ENCODE measurements at regions of chr12 and their contacts with region 1.

Region 1: GRCh38 chr12:38138225-38139221 is 178.1 kb upstream of the ALG10B start:
- DNase-seq: peak; percentile 70
- ATAC-seq: peak; percentile 71
- H3K4me3 Mint-ChIP-seq: peak overlapping the region; percentile 67
- H3K27ac Mint-ChIP-seq: no peak overlapping the region
- H3K4me1 Mint-ChIP-seq: peaks cover 9% of the 10 kb centered on the region
- H3K27me3 Mint-ChIP-seq: peaks cover 5% of the 10 kb centered on the region

Region 2: DNA sequence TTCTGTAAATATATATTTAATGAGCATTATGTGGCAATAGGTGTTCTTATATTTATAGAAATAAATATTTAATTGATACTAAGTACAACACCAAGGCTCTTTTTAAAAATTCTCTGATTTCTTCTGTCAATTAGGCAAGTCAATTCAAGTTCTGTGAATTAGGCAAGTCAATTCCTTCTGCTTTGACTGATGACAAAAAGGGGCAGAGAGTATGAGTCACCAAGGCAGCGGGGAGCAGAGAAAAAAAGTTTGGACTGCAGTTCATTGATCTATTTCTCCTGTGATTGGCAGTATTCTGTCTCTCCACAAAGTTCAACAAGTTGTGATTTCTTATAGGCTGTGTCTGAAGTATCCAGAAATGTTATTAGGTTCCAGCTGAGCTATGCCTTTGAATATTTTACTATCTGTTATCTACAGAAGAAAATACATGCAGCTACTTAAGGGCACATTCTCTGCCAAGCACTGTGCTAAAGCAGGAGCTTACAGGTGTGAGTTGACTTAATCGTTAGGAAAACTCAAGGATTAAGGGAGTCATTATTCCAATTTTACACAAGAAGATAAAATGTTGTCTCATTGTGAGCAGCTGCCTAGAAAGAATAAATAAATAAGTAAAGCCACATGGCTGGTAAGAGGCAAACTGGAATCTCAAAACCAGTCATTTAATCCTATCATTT is 28.4 kb before region 1 on chr12:
- CTCF ChIA-PET with region 1: no interaction called
- DNase-seq: no peak
- ATAC-seq: no peak
- H3K4me3 Mint-ChIP-seq: no peak overlapping the region
- H3K27ac Mint-ChIP-seq: no peak overlapping the region
- H3K4me1 Mint-ChIP-seq: no peaks in the 10 kb centered on the region
- H3K27me3 Mint-ChIP-seq: no peaks in the 10 kb centered on the region

Region 3: DNA sequence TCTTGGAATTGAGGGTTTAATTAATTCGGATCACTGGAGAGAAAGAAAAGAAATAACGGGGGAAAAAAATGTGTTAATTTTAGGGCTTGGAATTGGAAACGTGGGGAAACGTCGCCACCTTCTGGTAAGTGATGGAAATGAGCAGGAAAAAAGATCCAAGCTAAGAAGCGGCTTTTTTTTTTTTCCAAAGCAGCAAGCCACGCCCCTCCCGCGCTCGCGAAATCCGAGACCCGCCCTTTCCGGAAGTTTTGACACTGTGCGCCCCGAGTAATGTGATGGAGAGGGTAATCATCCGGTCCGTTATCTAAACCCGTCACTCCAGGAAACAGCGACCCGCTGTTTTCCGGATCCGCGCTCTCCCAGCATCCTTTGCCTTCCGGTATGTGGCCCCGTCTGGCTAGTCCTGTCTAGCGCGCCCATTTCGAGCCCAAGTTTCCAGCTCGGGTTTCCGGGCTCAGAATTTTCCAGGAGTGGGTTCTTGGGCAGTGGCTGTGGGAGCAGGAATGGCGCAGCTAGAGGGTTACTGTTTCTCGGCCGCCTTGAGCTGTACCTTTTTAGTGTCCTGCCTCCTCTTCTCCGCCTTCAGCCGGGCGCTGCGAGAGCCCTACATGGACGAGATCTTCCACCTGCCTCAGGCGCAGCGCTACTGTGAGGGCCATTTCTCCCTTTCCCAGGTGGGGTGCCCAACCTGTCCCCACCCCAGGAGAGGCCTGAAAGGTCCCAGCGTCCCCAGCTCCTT is 178.0 kb after region 1 on chr12 and contains the start of gene ALG10B:
- CTCF ChIA-PET with region 1: interaction called, 14 read pairs
- DNase-seq: peak; percentile 96
- ATAC-seq: peak; percentile 100
- H3K4me3 Mint-ChIP-seq: peak within 1 kb of the TSS; percentile 98
- H3K27ac Mint-ChIP-seq: peak within 1 kb of the TSS; percentile 95
- H3K4me1 Mint-ChIP-seq: peaks cover 23% of the 10 kb centered on the region
- H3K27me3 Mint-ChIP-seq: no peaks in the 10 kb centered on the region
- total RNA-seq, gene ALG10B: 15.0 to 18.9 TPM

Region 4: DNA sequence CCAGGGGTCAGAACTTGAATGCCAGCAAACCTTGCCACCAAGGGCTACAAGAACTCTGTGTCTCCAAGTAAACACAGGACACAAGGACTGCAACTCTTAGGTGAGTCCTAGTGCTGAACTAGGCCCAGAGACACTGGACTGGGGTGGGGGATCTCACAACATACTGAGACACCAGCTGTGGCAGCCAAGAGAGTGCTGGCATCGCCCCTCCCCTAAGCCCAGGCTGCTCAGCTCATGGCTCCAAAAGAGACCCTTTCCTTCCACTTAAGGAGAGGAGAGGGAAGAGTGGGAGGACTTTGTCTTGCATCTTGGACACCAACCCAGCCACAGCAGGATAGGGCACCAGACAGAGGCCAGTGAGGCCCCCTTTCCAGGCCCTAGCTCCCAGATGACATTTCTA is 432.9 kb after region 1 on chr12:
- CTCF ChIA-PET with region 1: no interaction called
- DNase-seq: no peak
- ATAC-seq: no peak
- H3K4me3 Mint-ChIP-seq: no peak overlapping the region
- H3K27ac Mint-ChIP-seq: no peak overlapping the region
- H3K4me1 Mint-ChIP-seq: no peaks in the 10 kb centered on the region
- H3K27me3 Mint-ChIP-seq: no peaks in the 10 kb centered on the region